Aorta (tissue), 5 donors: ENCODE measurements at regions of chr11 and their contacts with region 1.

Region 1: DNA sequence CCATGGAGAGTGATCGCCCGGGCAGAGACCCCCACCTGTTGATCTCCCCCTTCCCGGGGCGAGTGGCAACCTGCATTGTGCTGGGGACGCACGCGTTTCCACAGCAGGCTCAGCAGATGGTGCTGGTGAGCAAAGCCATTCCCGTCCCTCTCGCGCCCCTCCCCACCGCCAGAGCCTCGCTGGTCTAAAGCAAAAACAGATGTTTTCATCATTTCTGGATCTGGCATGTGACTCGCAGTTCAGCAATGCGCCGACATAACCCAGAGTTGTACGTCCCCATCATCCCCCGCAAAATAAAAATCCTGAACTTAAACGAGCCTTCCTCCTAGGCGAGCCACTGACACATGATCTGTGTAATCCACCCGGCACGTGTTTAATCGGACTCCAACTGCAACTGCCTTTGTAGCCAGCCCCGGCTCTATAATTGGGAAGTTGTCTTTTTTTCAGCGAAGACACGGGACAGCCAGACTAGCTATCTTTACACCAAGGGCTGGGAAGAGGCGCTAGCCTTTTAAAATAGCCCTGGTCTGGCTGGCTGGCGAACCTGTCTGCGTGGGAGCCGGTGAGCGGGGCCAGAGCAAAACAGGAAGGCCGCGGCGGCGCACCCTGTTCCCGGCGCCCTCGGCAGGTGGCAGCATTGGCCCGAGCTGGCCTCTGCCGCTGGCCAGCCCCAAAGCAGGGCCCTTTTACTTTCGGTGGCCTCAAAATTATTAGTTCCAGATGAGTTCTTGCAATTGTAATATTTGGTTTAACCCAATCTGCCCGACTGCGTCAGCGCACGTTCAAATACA is 203.0 kb upstream of the SORL1-AS1 start:
- DNase-seq: peak; percentile 93 to 96
- ATAC-seq: peak; percentile 98
- H3K4me3 ChIP-seq: peak overlapping the region; percentile 19 to 57
- H3K27ac ChIP-seq: peak overlapping the region; percentile 74 to 99
- H3K4me1 ChIP-seq: no peaks in the 10 kb centered on the region
- H3K27me3 ChIP-seq: no peaks in the 10 kb centered on the region

Region 2: DNA sequence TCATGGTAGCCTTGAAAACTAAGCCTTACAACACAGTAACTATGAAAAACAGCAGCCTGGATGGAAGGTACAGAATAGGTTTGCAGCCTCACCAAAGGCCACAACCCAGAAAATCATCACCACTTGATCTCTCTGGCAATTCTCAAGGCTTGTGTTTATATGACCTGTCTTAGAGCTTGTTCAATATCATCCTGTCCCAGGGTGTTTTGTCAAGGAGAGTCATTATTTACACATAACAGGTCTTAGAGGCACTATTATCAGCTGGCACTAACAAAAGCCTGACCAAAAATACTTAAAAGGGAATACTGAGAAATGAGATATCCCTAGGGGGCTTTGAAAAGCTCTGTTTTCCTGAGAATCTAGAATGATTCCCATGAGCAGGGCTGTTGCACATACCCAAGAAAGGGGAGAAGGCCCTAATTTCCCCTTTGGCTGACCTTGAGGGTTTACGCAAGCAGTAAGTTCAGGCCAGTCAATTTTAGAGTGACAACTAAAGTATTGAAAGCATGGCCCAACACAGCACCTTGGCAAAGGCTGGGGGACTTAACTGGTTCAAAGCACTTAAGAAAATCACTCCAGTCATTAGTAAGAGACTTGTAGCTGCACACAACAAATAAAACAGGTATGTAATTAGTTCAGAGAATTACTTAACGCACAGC is 355.3 kb before region 1 on chr11:
- intact Hi-C with region 1: no loop called
- DNase-seq: no peak
- ATAC-seq: no peak
- H3K4me3 ChIP-seq: no peak overlapping the region
- H3K27ac ChIP-seq: no peak overlapping the region
- H3K4me1 ChIP-seq: no peaks in the 10 kb centered on the region
- H3K27me3 ChIP-seq: no peaks in the 10 kb centered on the region

Region 3: GRCh38 chr11:121613724-121614123 is 42.0 kb before region 1 on chr11:
- intact Hi-C with region 1: no loop called
- DNase-seq: no peak
- ATAC-seq: no peak
- H3K4me3 ChIP-seq: no peak overlapping the region
- H3K27ac ChIP-seq: no peak overlapping the region
- H3K4me1 ChIP-seq: no peaks in the 10 kb centered on the region
- H3K27me3 ChIP-seq: no peaks in the 10 kb centered on the region

Region 4: DNA sequence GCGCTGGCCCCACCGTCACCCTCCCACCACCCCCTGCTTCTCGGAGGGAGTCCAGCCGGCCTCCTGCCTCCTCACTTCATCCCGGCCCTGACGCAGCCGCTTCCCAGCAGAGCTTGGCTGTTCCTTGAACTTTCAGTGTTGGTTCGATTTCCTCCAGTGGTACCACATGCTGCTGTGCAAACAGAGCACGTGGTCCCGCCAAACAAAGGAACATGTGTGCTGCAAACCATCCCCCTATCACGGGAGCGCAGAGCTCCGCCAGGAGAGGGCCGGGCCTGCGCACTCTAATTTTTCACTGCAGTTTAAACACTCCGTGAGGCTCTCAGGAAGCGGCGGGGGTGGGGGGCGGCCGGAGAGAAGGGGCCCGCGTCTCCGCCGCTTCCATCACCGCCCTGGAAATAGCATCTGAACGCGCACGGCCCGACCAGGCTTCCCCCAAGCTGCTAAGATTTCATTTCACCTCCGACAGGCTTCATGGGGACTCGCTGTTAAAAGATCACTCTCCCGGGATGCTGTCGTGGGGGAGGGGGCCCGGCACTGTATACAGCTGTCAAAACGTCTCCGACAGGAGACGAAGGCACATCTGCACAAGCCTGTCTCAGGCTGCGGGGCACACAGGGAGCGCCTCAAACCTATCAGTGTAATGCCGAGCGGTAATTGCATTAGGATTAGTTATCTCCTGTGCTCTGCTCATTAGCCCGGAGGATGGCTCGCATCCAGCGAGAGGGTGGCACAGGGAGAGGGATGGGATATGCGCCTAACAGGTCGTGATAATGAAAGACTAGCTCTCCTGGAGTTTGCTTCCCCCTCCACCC is 66.9 kb after region 1 on chr11:
- intact Hi-C with region 1: loop called in 1 of 2 experiments (anchors 5 kb)
- DNase-seq: peak; percentile 89 to 91
- ATAC-seq: peak; percentile 94
- H3K4me3 ChIP-seq: peak overlapping the region; percentile 34 to 72
- H3K27ac ChIP-seq: peak overlapping the region; percentile 60 to 80
- H3K4me1 ChIP-seq: no peaks in the 10 kb centered on the region
- H3K27me3 ChIP-seq: no peaks in the 10 kb centered on the region

Region 5: DNA sequence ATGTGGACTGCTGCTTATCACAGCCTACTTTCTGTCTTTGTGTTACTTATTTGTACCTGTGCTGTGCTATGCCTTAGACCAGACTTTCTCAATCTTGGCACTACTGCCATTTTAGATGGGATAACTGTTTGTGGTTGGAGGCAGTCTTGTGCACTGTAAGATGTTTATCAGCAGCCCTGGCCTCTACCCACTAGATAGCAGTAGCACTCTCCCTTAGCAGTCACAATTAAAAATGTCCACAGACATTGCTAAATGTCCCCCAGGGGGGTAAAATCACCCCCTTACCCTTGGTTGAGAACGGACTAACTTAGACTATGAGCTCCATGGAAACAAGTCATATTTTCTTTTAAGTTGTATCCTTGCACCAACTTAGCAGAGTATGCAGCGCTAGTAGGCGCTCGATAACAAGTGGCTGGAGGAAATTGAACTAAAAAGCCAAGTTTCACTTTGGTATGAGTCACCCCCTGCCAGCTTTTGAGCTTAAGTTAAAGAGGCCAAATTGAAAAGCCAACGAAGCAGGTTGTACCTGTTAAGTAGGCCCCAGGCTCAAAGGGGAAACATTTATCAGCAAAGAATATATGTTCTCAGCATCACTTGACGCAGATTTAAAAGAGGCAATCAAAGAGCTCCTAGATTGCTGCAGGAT is 101.9 kb after region 1 on chr11:
- intact Hi-C with region 1: loop called in 1 of 2 experiments (anchors 5 kb)
- DNase-seq: peak in 1 of 2 donors; percentile 54
- ATAC-seq: no peak
- H3K4me3 ChIP-seq: no peak overlapping the region
- H3K27ac ChIP-seq: peak overlapping the region in 1 of 2 donors; percentile 40
- H3K4me1 ChIP-seq: peaks cover 0 to 6% of the 10 kb centered on the region in 2 donors
- H3K27me3 ChIP-seq: no peaks in the 10 kb centered on the region

Region 6: DNA sequence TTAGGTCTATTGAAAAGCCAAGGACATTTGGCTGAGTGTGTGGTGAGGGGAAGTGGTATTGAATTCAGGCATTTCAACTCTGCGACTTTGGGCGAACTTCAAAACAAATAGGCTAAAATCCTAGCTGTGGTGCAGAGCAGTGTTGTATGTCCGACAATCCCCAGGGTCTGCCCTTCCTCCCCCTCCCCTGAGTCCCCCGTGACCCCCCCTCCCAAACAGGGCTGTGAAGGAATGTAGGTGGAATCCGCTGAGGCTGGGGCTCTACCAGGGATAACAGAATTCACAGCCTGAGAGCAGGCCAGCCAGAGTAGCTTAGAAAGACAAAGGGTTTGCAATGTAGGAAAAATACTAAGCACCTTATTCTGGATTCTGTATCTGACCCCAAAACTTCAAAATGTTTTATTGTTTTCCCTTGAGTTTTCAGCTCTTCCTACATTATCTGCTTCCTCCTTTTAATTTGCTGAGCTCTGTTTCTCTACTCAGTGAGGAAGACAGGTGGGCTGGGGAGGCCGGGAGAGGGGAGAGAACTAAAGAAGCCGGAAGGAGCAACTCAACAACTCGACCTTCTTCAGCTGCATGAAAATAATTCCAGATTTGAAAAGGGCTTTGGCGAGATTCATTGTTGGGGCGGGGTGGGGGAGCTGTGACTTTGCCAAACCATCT is 145.1 kb after region 1 on chr11:
- intact Hi-C with region 1: no loop called
- DNase-seq: peak in 1 of 2 donors; percentile 51
- ATAC-seq: peak; percentile 66
- H3K4me3 ChIP-seq: no peak overlapping the region
- H3K27ac ChIP-seq: peak overlapping the region; percentile 16 to 51
- H3K4me1 ChIP-seq: peaks cover 0 to 2% of the 10 kb centered on the region in 2 donors
- H3K27me3 ChIP-seq: no peaks in the 10 kb centered on the region

Region 7: GRCh38 chr11:122020902-122021301 is 365.2 kb after region 1 on chr11:
- intact Hi-C with region 1: loop called (anchors 5 kb)
- DNase-seq: no peak
- ATAC-seq: no peak
- H3K4me3 ChIP-seq: no peak overlapping the region
- H3K27ac ChIP-seq: no peak overlapping the region
- H3K4me1 ChIP-seq: no peaks in the 10 kb centered on the region
- H3K27me3 ChIP-seq: no peaks in the 10 kb centered on the region

Region 8: DNA sequence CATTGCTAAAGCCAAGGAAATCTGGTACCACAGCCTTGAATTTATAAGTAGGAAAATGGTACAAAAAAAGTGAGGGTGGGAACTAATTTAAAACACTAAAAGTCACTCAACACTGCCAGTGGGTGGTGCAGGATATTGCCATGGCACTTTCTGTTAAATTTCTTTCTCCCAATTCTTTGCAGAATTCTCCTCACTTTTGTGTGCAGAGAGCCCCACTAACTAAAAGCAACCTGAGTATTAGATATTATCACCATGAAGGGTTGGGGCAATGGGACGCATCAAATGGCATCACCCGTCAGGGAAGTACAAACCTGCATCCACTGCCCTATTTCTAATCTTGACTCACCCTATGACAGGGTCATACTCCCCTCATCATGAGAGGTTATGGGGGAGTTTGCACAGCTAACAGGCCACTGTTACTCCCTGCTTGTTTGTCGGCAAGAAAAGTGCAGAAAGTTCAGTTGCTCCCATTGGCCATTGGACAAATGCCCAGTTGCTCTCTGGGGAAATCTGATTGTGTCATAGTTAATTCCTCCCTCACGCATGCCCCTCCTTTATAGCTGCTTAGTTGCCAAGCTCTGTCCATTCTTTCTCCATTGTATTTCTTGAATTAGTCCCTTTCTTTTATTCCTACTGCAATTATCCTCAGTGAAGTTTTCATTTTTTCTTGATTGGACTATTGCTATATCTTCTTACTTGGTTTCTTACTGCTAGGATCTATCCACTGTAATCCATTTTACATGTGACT is 554.1 kb after region 1 on chr11:
- intact Hi-C with region 1: loop called (anchors 5 kb)
- DNase-seq: peak in 1 of 2 donors; percentile 78
- ATAC-seq: peak; percentile 74
- H3K4me3 ChIP-seq: no peak overlapping the region
- H3K27ac ChIP-seq: peak overlapping the region; percentile 63 to 94
- H3K4me1 ChIP-seq: peaks cover 8 to 12% of the 10 kb centered on the region in 2 donors
- H3K27me3 ChIP-seq: no peaks in the 10 kb centered on the region